CD8-positive, alpha-beta T cell (primary cell): ENCODE measurements at regions of chr9 and their contacts with region 1.

Region 1: GRCh38 chr9:25377039-25377438 is 301.2 kb downstream of the TUSC1 start:
- DNase-seq: no peak
- ATAC-seq: no peak
- H3K4me3 ChIP-seq: no peak overlapping the region
- H3K4me3 Mint-ChIP-seq: no peak overlapping the region
- H3K27ac ChIP-seq: no peak overlapping the region
- H3K27ac Mint-ChIP-seq: no peak overlapping the region
- H3K4me1 ChIP-seq: no peaks in the 10 kb centered on the region
- H3K4me1 Mint-ChIP-seq: no peaks in the 10 kb centered on the region
- H3K27me3 ChIP-seq: no peaks in the 10 kb centered on the region
- H3K27me3 Mint-ChIP-seq: no peaks in the 10 kb centered on the region
- CTCF ChIP-seq: no peak

Region 2: GRCh38 chr9:25353783-25354182 is 23.3 kb before region 1 on chr9:
- CTCF ChIA-PET with region 1: no interaction called
- POLR2A ChIA-PET with region 1: no interaction called
- intact Hi-C with region 1: no loop called
- DNase-seq: no peak
- ATAC-seq: no peak
- H3K4me3 ChIP-seq: no peak overlapping the region
- H3K4me3 Mint-ChIP-seq: no peak overlapping the region
- H3K27ac ChIP-seq: no peak overlapping the region
- H3K27ac Mint-ChIP-seq: no peak overlapping the region
- H3K4me1 ChIP-seq: no peaks in the 10 kb centered on the region
- H3K4me1 Mint-ChIP-seq: no peaks in the 10 kb centered on the region
- H3K27me3 ChIP-seq: no peaks in the 10 kb centered on the region
- H3K27me3 Mint-ChIP-seq: no peaks in the 10 kb centered on the region
- CTCF ChIP-seq: no peak

Region 3: DNA sequence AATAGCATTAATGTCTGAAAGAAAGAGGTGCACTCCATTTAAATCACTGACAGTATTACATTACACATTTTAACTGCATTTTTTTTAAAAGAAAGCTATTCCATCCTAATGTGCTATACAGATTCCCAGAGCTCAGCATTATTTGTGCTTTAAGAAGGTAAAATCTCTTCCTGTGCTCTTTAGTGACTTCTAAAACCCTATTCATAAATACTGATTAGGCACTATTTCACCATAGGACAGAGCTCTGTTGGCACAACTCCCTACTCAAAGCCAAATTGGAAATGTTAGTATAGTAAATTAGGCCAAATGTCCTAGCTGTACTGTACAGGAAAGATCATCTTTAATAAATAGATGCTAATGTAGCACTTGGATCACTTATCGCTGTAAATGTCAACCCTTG is 38.7 kb after region 1 on chr9:
- CTCF ChIA-PET with region 1: no interaction called
- POLR2A ChIA-PET with region 1: no interaction called
- intact Hi-C with region 1: loop called in 1 of 2 experiments (anchors 2 kb)
- DNase-seq: no peak
- ATAC-seq: no peak
- H3K4me3 ChIP-seq: no peak overlapping the region
- H3K4me3 Mint-ChIP-seq: no peak overlapping the region
- H3K27ac ChIP-seq: no peak overlapping the region
- H3K27ac Mint-ChIP-seq: no peak overlapping the region
- H3K4me1 ChIP-seq: no peaks in the 10 kb centered on the region
- H3K4me1 Mint-ChIP-seq: no peaks in the 10 kb centered on the region
- H3K27me3 ChIP-seq: no peaks in the 10 kb centered on the region
- H3K27me3 Mint-ChIP-seq: no peaks in the 10 kb centered on the region
- CTCF ChIP-seq: no peak

Region 4: GRCh38 chr9:25519301-25519700 is 142.3 kb after region 1 on chr9:
- CTCF ChIA-PET with region 1: no interaction called
- POLR2A ChIA-PET with region 1: no interaction called
- intact Hi-C with region 1: no loop called
- DNase-seq: no peak
- ATAC-seq: no peak
- H3K4me3 ChIP-seq: no peak overlapping the region
- H3K4me3 Mint-ChIP-seq: no peak overlapping the region
- H3K27ac ChIP-seq: no peak overlapping the region
- H3K27ac Mint-ChIP-seq: no peak overlapping the region
- H3K4me1 ChIP-seq: no peaks in the 10 kb centered on the region
- H3K4me1 Mint-ChIP-seq: no peaks in the 10 kb centered on the region
- H3K27me3 ChIP-seq: no peaks in the 10 kb centered on the region
- H3K27me3 Mint-ChIP-seq: no peaks in the 10 kb centered on the region
- CTCF ChIP-seq: no peak